Mammary epithelial cell (primary cell): ENCODE measurements at regions of chr14 and their contacts with region 1.

Region 1: GRCh38 chr14:76773188-76773885 is 12.1 kb downstream of the VASH1 start:
- DNase-seq: peak; percentile 74
- H3K4me3 ChIP-seq: peak overlapping the region in 1 of 3 experiments; percentile 23
- H3K27ac ChIP-seq: no peak overlapping the region
- H3K4me1 ChIP-seq: peaks cover 12% of the 10 kb centered on the region
- H3K27me3 ChIP-seq: peaks cover 4% of the 10 kb centered on the region
- CTCF ChIP-seq: peak in 1 of 2 donors; percentile 10

Region 2: GRCh38 chr14:76715511-76716081 is 57.7 kb before region 1 on chr14:
- CTCF ChIA-PET with region 1: no interaction called
- dilution Hi-C with region 1: loop called (anchors 5 kb)
- in situ Hi-C with region 1: no loop called
- intact Hi-C with region 1: no loop called
- DNase-seq: no peak
- H3K4me3 ChIP-seq: no peak overlapping the region
- H3K27ac ChIP-seq: no peak overlapping the region
- H3K4me1 ChIP-seq: no peaks in the 10 kb centered on the region
- H3K27me3 ChIP-seq: no peaks in the 10 kb centered on the region
- CTCF ChIP-seq: no peak

Region 3: DNA sequence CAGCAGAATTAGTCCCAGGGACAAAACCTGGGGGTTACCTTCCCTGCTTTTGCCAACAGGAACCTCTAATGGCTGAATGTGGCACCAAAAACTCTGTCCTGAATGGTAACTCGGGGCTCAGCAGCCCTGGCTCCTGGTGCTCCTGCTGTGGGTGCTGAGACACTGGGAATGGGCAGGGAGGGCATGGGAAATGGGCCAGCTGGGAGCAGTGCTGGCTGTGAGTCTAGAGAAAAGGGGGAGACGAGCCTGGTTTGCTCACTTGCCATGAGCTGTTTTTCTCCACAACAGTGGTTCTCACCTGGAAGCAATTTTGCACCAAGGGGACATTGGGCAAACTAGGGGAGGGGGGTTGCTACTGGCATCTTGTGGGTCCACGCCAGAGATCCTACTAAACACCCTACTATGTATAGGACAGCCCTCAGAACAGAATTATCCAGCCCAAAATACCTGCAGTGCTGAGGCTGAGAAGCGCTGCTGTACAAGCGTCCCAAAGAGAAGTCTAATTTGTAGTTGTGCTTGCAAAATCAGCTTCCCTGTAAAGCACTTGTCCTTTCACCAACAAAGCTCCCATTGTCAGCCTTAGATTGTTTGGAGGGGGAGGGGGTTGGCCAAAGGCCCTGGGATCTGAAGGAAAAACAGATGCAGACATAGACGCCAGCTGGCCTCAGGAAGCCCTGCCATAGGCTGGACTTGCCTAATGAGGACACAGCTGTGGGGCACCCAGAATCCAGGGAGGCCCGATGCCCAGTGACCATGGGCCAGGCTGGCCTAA is 56.5 kb after region 1 on chr14:
- CTCF ChIA-PET with region 1: no interaction called
- dilution Hi-C with region 1: loop called (anchors 5 kb)
- in situ Hi-C with region 1: no loop called
- intact Hi-C with region 1: no loop called
- DNase-seq: peak; percentile 9
- H3K4me3 ChIP-seq: no peak overlapping the region
- H3K27ac ChIP-seq: no peak overlapping the region
- H3K4me1 ChIP-seq: peaks cover 4% of the 10 kb centered on the region
- H3K27me3 ChIP-seq: no peaks in the 10 kb centered on the region
- CTCF ChIP-seq: no peak